Dorsolateral prefrontal cortex (tissue), 120 donors: ENCODE measurements at regions of chr7 and their contacts with region 1.

Region 1: GRCh38 chr7:63112764-63113712 is 885.6 kb upstream of the ZNF722 start:
- DNase-seq: no peak
- H3K4me3 ChIP-seq: no peak overlapping the region
- H3K27ac ChIP-seq: no peak overlapping the region
- H3K27me3 ChIP-seq: peaks cover 0 to 13% (median 0%) of the 10 kb centered on the region in 45 donors
- CTCF ChIP-seq: no peak

Region 2: DNA sequence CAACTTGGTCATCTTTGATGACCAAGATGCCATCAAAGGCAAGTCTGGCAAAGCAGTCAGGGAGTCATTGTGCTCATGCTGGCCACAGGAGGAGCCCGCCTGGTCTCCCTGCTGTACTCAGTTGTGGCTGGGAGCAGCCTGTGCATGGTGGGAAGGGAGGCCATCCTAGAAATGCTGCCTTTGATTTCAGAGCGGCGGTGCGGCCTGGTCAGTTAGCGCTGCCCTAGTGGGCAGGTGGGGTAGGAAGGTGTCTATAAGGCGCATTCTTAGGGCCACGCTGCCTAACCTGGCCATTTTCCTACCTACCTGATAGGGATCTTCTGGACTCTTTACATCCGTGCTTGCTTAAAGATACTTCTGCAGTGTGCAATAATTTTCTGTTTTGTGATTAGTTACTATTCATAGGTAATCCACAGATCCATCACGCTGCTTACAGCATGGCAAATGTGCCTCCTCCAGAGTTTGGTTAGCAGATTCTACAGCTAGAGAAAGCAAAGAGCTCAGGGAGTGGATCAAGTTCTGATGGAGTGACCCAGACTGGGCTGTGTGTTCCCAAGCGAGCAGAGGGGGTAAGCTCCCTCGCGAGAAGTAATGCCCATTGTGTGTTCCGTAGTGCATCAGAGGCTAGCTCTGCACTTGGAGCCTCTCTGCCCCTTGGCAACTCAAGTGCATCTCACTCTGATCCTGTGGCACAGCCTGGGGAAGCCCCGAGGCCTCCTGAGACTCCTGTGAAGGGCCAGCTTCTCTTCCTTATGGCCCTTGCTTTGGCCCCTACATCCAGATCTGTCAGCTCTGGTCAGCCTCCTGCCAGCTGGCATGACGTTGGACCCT is 84.4 kb before region 1 on chr7:
- intact Hi-C with region 1: no loop called
- DNase-seq: no peak
- H3K4me3 ChIP-seq: no peak overlapping the region
- H3K27ac ChIP-seq: no peak overlapping the region
- H3K27me3 ChIP-seq: peaks cover 0 to 23% (median 0%) of the 10 kb centered on the region in 45 donors
- CTCF ChIP-seq: no peak

Region 3: DNA sequence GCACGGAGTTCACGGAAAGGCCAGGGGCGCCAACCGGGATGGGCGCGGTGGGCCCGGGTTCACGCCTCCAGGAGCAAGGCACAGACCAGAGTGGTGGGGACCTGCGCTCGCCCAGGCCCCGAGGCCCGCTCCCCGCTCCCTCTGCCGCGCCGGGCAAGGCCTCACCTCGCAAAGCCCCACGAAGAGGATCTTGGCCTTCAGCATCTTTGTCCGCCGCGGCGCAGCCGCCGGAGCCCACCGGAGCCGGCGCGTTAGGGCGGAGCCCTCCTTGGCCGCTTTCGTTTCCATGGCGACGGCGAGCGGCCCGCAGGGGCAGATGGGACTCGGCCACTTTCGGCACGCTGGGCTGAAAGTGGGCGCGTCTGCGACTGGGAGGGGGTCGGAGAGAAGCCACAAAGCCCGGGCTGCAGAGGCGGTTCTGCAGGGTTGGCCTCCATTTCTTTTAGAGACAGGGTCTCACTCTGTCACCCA is 58.8 kb before region 1 on chr7:
- intact Hi-C with region 1: loop called in 1 of 2 experiments (anchors 10 kb)
- DNase-seq: no peak
- H3K4me3 ChIP-seq: no peak overlapping the region
- H3K27ac ChIP-seq: no peak overlapping the region
- H3K27me3 ChIP-seq: peaks cover 0 to 14% (median 0%) of the 10 kb centered on the region in 45 donors
- CTCF ChIP-seq: no peak

Region 4: DNA sequence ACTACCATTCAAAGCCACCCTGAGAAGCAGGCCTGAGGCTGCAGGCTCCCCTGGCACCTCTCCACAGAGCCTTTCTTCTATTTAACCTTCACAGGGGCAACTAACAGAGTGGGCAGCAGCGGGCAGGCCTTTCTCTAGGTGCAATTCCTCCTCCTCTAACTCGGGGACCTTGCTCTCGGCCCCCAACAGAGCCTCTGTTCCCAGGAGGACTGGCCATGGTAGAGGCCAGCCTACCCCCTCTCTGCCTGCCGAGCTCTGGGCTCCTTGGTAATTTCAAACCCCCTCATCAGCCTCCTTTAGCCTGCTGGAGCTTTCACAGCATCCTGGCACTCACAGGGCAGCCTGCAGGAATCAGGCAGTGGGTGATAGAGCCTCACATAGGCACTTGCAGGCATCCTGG is 35.2 kb before region 1 on chr7:
- intact Hi-C with region 1: loop called in 1 of 2 experiments (anchors 5 kb)
- DNase-seq: no peak
- H3K4me3 ChIP-seq: no peak overlapping the region
- H3K27ac ChIP-seq: no peak overlapping the region
- H3K27me3 ChIP-seq: peaks cover 0 to 10% (median 0%) of the 10 kb centered on the region in 45 donors
- CTCF ChIP-seq: no peak